ENCODE measurements at regions of chr17 and their contacts with region 1.

Region 1: GRCh38 chr17:32755045-32755805 is 121.7 kb downstream of the MYO1D start:
- DNase-seq: no peak
- ATAC-seq: peak; percentile 71
- H3K4me3 Mint-ChIP-seq: no peak overlapping the region
- H3K27ac Mint-ChIP-seq: no peak overlapping the region
- H3K4me1 Mint-ChIP-seq: peaks cover 16% of the 10 kb centered on the region
- H3K27me3 Mint-ChIP-seq: no peaks in the 10 kb centered on the region

Region 2: GRCh38 chr17:32227910-32228309 is 527.3 kb before region 1 on chr17:
- CTCF ChIA-PET with region 1: no interaction called
- POLR2A ChIA-PET with region 1: no interaction called
- intact Hi-C with region 1: no loop called
- DNase-seq: no peak
- ATAC-seq: no peak
- H3K4me3 Mint-ChIP-seq: no peak overlapping the region
- H3K27ac Mint-ChIP-seq: no peak overlapping the region
- H3K4me1 Mint-ChIP-seq: peaks cover 8% of the 10 kb centered on the region
- H3K27me3 Mint-ChIP-seq: no peaks in the 10 kb centered on the region

Region 3: GRCh38 chr17:32253117-32253611 is 502.1 kb before region 1 on chr17:
- CTCF ChIA-PET with region 1: interaction called, 4 read pairs
- POLR2A ChIA-PET with region 1: no interaction called
- intact Hi-C with region 1: loop called in 1 of 2 experiments (anchors 5 kb)
- DNase-seq: peak; percentile 85
- ATAC-seq: peak; percentile 100
- H3K4me3 Mint-ChIP-seq: no peak overlapping the region
- H3K27ac Mint-ChIP-seq: no peak overlapping the region
- H3K4me1 Mint-ChIP-seq: no peaks in the 10 kb centered on the region
- H3K27me3 Mint-ChIP-seq: no peaks in the 10 kb centered on the region

Region 4: DNA sequence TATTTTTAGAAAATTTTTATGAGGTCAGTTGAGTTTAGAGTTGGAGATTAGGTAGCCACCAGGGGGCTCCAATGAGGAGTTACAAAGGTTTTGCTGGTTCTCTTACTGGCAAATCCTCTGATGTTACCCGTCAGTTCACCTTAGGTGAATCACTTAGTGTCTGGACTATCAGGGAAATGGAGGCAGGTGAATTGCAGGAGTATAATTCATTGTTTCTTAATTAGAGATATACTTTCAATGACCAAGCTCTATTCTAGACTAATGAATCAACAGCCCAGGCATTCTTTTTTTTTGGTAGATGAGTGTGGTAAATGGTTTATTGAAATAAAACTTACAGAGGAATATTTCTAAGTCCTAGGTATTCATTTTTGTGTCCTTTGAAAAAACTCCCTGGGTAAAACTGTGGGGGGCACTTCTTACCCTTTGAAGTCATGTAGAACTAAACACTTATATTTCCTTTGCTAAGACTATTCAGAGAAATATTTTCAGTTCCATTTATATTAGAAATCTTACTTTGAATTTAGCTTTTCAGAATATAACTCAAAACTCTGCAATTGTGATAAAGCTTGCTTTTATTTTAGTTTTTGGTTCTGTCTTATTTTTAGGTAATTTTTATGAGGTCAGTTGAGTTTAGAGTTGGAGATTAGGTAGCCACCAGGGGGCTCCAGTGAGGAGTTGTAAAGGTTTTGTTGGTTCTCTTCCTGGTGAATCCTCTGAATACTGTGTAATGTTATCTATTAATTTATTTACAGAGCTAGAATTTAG is 293.2 kb before region 1 on chr17:
- CTCF ChIA-PET with region 1: interaction called, 21 read pairs
- POLR2A ChIA-PET with region 1: no interaction called
- intact Hi-C with region 1: loop called (anchors 1 kb)
- DNase-seq: peak; percentile 83
- ATAC-seq: peak; percentile 79
- H3K4me3 Mint-ChIP-seq: no peak overlapping the region
- H3K27ac Mint-ChIP-seq: peak overlapping the region; percentile 56
- H3K4me1 Mint-ChIP-seq: peaks cover 33% of the 10 kb centered on the region
- H3K27me3 Mint-ChIP-seq: no peaks in the 10 kb centered on the region

Region 5: DNA sequence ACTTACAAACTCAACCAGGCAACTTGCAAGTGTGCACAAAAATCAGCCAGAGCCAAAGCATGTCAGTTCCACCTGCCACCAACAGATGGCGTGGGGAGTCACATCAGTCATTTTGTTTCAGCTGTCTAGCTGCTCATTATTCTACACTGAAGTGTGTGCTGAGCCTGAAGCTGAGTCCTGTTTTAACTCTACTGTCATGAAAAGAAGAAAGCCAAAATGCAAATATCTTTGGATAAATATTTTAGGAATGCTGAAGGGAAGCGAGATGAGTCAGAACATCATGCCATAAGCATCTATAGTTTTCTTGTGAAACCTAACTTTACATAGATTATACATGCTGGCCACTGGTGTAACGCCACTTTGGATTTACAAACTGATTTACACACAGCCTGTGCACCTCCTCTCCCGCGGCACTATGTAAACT is 95.8 kb before region 1 on chr17:
- CTCF ChIA-PET with region 1: interaction called, 3 read pairs
- POLR2A ChIA-PET with region 1: no interaction called
- intact Hi-C with region 1: loop called (anchors 1 kb)
- DNase-seq: peak; percentile 81
- ATAC-seq: peak; percentile 74
- H3K4me3 Mint-ChIP-seq: no peak overlapping the region
- H3K27ac Mint-ChIP-seq: no peak overlapping the region
- H3K4me1 Mint-ChIP-seq: no peaks in the 10 kb centered on the region
- H3K27me3 Mint-ChIP-seq: no peaks in the 10 kb centered on the region

Region 6: DNA sequence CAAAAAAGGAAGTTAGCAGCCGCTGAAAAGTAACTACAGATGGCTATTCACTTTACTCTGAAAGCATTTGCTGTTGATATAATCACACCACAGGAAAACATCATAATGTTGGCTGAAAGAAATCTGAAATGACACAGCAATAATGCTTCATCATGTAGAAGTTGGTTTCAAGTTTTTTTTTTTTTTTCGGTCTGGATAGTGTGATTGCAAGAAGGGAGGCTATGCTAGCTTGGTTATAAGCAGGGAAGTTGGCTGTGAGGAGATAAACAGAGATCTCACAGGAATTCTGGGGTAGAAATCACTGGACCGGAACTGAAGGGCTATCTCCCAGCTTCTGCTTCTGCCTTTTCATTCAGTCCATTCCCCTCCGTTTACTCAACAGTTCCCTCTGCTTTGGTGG is 63.8 kb after region 1 on chr17:
- CTCF ChIA-PET with region 1: no interaction called
- POLR2A ChIA-PET with region 1: no interaction called
- intact Hi-C with region 1: loop called in 1 of 2 experiments (anchors 10 kb)
- DNase-seq: no peak
- ATAC-seq: no peak
- H3K4me3 Mint-ChIP-seq: no peak overlapping the region
- H3K27ac Mint-ChIP-seq: no peak overlapping the region
- H3K4me1 Mint-ChIP-seq: peaks cover 2% of the 10 kb centered on the region
- H3K27me3 Mint-ChIP-seq: peaks cover 16% of the 10 kb centered on the region

Measured in activated CD4-positive, alpha-beta T cell treated with anti-CD3 and anti-CD28 coated beads for 36 hours (primary cell).